WTC11 (cell line): ENCODE measurements at regions of chr10 and their contacts with region 1.

Region 1: DNA sequence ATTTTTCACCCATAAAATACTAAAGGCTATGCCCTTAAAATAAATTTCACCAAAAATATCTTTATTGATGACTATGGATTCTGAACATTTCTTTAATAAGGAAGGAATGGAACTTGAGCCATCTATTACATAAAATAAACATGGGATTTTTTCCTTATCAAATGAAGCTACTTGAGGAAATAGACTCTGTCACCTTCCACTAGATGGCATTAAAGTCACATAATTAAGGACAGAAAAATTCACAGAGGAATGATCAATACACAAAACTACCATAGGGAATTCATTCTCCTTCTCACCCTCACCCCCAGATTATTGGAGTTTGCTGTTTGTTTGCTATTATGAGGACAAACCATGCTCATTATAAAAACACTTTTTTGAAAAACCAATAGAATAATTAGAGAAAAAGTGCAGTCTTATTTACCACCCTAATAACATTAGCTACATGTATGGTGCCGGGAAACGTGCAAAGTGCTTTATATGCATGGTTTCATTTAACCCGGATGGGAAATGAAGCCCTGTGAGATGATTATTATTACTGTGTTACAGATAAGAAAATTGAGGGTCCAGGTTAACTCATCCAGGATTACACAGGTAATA is 21.1 kb upstream of the FOXI2 start:
- DNase-seq: no peak
- ATAC-seq: no peak; the same call in 1 of the 2 replicates
- H3K4me3 Mint-ChIP-seq: no peak overlapping the region
- H3K27ac Mint-ChIP-seq: no peak overlapping the region
- H3K4me1 Mint-ChIP-seq: 0 out of 2 replicates have a peak, but pooled peaks cover 2% of the 10 kb centered on the region
- H3K27me3 Mint-ChIP-seq: no peaks in the 10 kb centered on the region; the same call in 1 of the 2 replicates
- CTCF ChIP-seq: no peak

Region 2: GRCh38 chr10:127649642-127650041 is 66.2 kb before region 1 on chr10:
- CTCF ChIA-PET with region 1: interaction called, 10 read pairs
- POLR2A ChIA-PET with region 1: no interaction called
- DNase-seq: peak; percentile 78
- ATAC-seq: peak; percentile 99
- H3K4me3 Mint-ChIP-seq: no peak overlapping the region
- H3K27ac Mint-ChIP-seq: no peak overlapping the region
- H3K4me1 Mint-ChIP-seq: no peaks in the 10 kb centered on the region
- H3K27me3 Mint-ChIP-seq: no peaks in the 10 kb centered on the region
- CTCF ChIP-seq: peak; percentile 27; the same call in 1 of the 2 replicates

Region 3: DNA sequence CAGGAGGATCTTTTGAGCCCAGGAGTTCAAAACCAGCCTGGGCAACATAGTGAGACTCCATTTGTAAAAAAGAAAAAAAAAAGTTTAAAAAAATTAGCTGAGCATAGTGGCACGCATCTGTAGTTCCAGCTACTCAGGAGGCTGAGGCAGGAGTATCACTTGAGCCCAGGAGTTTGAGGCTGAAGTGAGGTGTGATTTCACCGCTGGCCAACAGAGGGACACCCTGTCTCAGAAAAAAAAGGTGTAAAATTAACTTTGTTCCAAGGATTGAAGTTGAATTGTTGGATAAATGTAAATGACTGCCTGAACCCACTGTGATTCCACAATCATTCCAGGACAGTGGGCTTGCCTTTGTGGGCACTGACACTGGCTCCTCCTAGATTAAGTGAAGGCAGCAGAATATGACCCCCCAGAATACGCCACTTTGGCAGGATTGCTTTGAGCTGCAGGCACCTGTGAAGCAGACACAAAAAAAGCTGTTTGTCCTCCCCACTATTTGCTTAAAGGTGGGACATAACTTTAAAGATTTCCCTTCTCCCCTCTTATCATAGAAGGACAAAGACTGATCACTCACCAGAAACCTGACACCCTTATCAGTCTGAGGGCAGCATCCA is 36.1 kb before region 1 on chr10:
- CTCF ChIA-PET with region 1: interaction called, 14 read pairs
- POLR2A ChIA-PET with region 1: no interaction called
- DNase-seq: peak; percentile 22
- ATAC-seq: peak; percentile 43; the same call in 1 of the 2 replicates
- H3K4me3 Mint-ChIP-seq: no peak overlapping the region
- H3K27ac Mint-ChIP-seq: no peak overlapping the region
- H3K4me1 Mint-ChIP-seq: peaks cover 8% of the 10 kb centered on the region
- H3K27me3 Mint-ChIP-seq: no peaks in the 10 kb centered on the region
- CTCF ChIP-seq: peak; percentile 62

Region 4: DNA sequence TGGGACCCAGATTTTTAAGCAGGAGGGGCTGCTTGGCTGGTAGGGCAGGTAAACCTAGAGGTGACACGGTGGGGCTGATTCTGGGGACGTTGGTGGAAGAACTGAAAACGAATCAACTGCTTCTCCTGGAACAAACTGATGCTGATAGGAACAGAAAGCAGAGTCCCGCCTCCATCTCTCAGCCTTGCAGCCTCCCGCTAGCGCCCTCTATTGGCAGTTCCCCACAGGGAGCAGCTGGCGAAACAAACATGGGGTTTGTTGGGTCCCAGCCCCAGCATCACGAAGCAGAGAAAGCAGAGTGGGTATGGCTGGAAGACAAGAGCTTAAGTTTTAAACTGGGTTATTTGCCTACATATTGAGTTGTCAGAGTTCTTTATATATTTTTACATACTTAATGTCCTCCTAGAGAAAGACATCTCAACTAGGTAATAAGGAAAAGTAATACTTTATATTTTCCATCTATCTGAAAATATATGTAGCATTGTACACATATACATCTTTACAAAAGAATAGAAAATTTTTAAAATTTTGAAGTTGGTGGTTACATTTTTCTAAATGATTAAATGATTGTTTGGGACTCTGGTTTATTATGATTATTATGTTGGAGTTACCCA is 21.2 kb before region 1 on chr10:
- CTCF ChIA-PET with region 1: interaction called, 19 read pairs
- POLR2A ChIA-PET with region 1: no interaction called
- DNase-seq: peak; percentile 93
- ATAC-seq: peak; percentile 90
- H3K4me3 Mint-ChIP-seq: no peak overlapping the region
- H3K27ac Mint-ChIP-seq: no peak overlapping the region; the same call in 1 of the 2 replicates
- H3K4me1 Mint-ChIP-seq: peaks cover 33% of the 10 kb centered on the region
- H3K27me3 Mint-ChIP-seq: no peaks in the 10 kb centered on the region
- CTCF ChIP-seq: peak; percentile 79

Region 5: DNA sequence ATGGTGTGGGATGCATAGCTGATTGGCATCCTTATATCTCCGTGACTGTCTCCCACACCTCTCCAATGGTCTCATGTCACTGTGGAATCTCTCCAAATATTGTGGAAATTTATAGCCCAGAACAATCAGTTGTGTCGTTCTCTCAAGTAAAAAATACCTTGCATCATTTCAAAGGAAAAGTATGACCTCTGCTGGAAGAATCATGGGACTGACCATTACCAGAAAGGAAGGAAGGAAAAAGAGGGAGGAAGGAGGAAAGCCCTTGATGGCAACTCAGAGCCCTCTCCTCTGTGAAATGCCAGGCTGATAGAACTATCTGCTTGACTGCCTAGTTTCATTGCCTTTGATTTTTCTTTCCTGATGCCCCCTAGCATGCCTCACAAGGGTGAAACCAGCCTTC is 97.4 kb after region 1 on chr10:
- CTCF ChIA-PET with region 1: interaction called, 36 read pairs
- POLR2A ChIA-PET with region 1: no interaction called
- DNase-seq: no peak
- ATAC-seq: peak; percentile 50
- H3K4me3 Mint-ChIP-seq: no peak overlapping the region
- H3K27ac Mint-ChIP-seq: no peak overlapping the region
- H3K4me1 Mint-ChIP-seq: peaks cover 5% of the 10 kb centered on the region; the same call in 1 of the 2 replicates
- H3K27me3 Mint-ChIP-seq: no peaks in the 10 kb centered on the region; the same call in 1 of the 2 replicates
- CTCF ChIP-seq: no peak